CD4-positive, alpha-beta memory T cell (primary cell): ENCODE measurements at regions of chr1 and their contacts with region 1.

Region 1: GRCh38 chr1:28248283-28249012 is 10.9 kb upstream of the SESN2 start:
- DNase-seq: peak; percentile 77 to 83 (median 81)
- H3K4me3 ChIP-seq: peak overlapping the region; percentile 2 to 25
- H3K4me3 Mint-ChIP-seq: peak overlapping the region; percentile 75 to 96 (median 88)
- H3K27ac ChIP-seq: peak overlapping the region; percentile 83
- H3K27ac Mint-ChIP-seq: peak overlapping the region; percentile 88 to 99 (median 94)
- H3K4me1 ChIP-seq: peaks cover 57% of the 10 kb centered on the region
- H3K4me1 Mint-ChIP-seq: peaks cover 34 to 56% (median 48%) of the 10 kb centered on the region in 4 donors
- H3K27me3 ChIP-seq: no peaks in the 10 kb centered on the region
- H3K27me3 Mint-ChIP-seq: no peaks in the 10 kb centered on the region

Region 2: GRCh38 chr1:28259307-28260167 is 11.1 kb after region 1 on chr1 and contains the start of gene SESN2:
- CTCF ChIA-PET with region 1: interaction called, 47 read pairs
- POLR2A ChIA-PET with region 1: interaction called, 179 read pairs
- intact Hi-C with region 1: loop called (anchors 1 kb)
- DNase-seq: peak; percentile 99
- H3K4me3 ChIP-seq: peak within 1 kb of the TSS; percentile 69 to 82
- H3K4me3 Mint-ChIP-seq: peak within 1 kb of the TSS; percentile 77 to 90 (median 82)
- H3K27ac ChIP-seq: peak within 1 kb of the TSS; percentile 67
- H3K27ac Mint-ChIP-seq: peak within 1 kb of the TSS; percentile 72 to 88 (median 84)
- H3K4me1 ChIP-seq: peaks cover 59% of the 10 kb centered on the region
- H3K4me1 Mint-ChIP-seq: peaks cover 29 to 58% (median 43%) of the 10 kb centered on the region in 4 donors
- H3K27me3 ChIP-seq: no peaks in the 10 kb centered on the region
- H3K27me3 Mint-ChIP-seq: no peaks in the 10 kb centered on the region
- total RNA-seq, gene SESN2: 5.7 to 6.4 TPM

Region 3: DNA sequence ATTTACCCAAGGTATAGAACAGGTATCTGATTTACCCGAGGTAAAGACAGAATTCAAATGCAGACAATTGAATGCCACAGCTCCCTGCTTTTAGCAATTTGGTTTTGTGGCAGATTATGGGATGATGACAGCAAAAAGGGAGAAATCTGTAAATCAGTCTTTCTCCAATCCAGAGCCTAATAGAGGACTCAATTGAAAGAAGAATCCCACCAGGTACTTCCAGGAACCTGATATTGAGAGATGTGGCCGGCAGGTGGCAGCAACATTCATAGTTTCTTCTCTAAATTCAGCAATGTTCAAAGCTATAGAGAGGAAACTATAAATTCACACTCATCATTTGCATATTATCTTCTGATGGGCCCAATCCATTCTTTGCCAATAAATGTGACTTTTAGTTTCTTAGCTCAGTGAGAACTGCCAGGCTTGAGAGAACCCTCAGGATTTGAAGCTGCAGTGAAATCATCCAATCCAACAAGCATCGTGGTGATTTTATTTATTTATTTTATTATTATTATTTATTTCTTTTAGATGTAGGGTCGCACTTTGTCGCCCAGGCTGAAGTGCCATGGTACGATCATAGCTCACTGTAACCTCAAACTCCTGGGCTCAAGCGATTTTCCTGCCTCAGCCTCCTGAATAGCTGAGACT is 111.3 kb after region 1 on chr1:
- CTCF ChIA-PET with region 1: interaction called, 45 read pairs
- POLR2A ChIA-PET with region 1: interaction called, 15 read pairs
- intact Hi-C with region 1: loop called (anchors 1 kb)
- DNase-seq: peak; percentile 54 to 73 (median 61)
- H3K4me3 ChIP-seq: no peak overlapping the region
- H3K4me3 Mint-ChIP-seq: no peak overlapping the region
- H3K27ac ChIP-seq: no peak overlapping the region
- H3K27ac Mint-ChIP-seq: no peak overlapping the region
- H3K4me1 ChIP-seq: no peaks in the 10 kb centered on the region
- H3K4me1 Mint-ChIP-seq: peaks cover 0 to 4% (median 2%) of the 10 kb centered on the region in 4 donors
- H3K27me3 ChIP-seq: no peaks in the 10 kb centered on the region
- H3K27me3 Mint-ChIP-seq: no peaks in the 10 kb centered on the region

Region 4: DNA sequence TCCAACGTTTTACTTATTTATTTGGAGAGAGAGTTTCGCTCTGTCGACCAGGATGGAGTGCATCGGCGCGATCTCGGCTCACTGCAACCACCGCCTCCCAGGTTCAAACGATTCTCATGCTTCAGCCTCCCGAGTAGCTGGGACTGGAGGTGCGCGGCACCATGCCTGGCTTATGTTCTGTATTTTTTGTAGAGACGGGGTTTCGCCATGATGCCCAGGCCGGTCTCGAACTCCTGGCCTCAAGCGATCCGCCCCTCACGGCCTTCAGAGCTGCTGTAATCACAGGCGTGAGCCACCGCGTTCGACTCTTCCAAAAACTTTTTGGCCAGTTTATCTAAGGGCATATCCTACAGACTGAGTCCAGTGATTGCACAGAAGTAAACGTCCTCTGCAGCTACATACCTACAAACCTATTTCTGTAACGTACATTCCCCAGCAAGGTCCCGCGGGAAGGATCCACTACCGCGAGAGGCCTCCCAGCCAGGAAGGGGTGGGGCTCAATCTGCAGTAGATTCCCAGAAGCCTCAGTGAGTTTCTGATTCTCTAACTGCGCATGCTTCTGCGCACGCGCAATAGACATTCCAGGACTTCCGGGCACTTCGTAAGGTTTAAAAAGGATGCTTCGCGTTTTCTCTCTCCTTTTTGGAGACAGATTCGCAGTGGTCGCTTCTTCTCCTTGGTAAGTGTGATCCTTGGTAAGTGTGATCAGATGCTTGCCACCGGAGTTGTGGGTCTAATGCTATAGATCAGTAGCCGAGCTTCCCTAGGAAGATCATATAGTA is 257.1 kb after region 1 on chr1 and contains the start of gene RCC1:
- CTCF ChIA-PET with region 1: interaction called, 6 read pairs
- POLR2A ChIA-PET with region 1: interaction called, 12 read pairs
- intact Hi-C with region 1: loop called (anchors 1 kb)
- DNase-seq: peak; percentile 94 to 98 (median 97)
- H3K4me3 ChIP-seq: peak within 1 kb of the TSS; percentile 76 to 96
- H3K4me3 Mint-ChIP-seq: peak within 1 kb of the TSS; percentile 94 to 100 (median 98)
- H3K27ac ChIP-seq: peak within 1 kb of the TSS; percentile 66
- H3K27ac Mint-ChIP-seq: peak within 1 kb of the TSS; percentile 96 to 99 (median 98)
- H3K4me1 ChIP-seq: peaks cover 37% of the 10 kb centered on the region
- H3K4me1 Mint-ChIP-seq: peaks cover 29 to 53% (median 38%) of the 10 kb centered on the region in 4 donors
- H3K27me3 ChIP-seq: no peaks in the 10 kb centered on the region
- H3K27me3 Mint-ChIP-seq: no peaks in the 10 kb centered on the region
- total RNA-seq, gene RCC1: 16.7 to 18.4 TPM

Region 5: GRCh38 chr1:28648474-28649198 is 400.2 kb after region 1 on chr1 and contains the start of gene RNU11:
- CTCF ChIA-PET with region 1: no interaction called
- POLR2A ChIA-PET with region 1: interaction called, 13 read pairs
- intact Hi-C with region 1: loop called (anchors 5 kb)
- DNase-seq: peak; percentile 93 to 95 (median 95)
- H3K4me3 ChIP-seq: peak within 1 kb of the TSS; percentile 55 to 91
- H3K4me3 Mint-ChIP-seq: peak within 1 kb of the TSS; percentile 84 to 94 (median 90)
- H3K27ac ChIP-seq: peak within 1 kb of the TSS; percentile 96
- H3K27ac Mint-ChIP-seq: peak within 1 kb of the TSS; percentile 99 to 100 (median 99)
- H3K4me1 ChIP-seq: peaks cover 31% of the 10 kb centered on the region
- H3K4me1 Mint-ChIP-seq: peaks cover 15 to 36% (median 25%) of the 10 kb centered on the region in 4 donors
- H3K27me3 ChIP-seq: no peaks in the 10 kb centered on the region
- H3K27me3 Mint-ChIP-seq: no peaks in the 10 kb centered on the region
- total RNA-seq, gene RNU11: not detected

Region 6: DNA sequence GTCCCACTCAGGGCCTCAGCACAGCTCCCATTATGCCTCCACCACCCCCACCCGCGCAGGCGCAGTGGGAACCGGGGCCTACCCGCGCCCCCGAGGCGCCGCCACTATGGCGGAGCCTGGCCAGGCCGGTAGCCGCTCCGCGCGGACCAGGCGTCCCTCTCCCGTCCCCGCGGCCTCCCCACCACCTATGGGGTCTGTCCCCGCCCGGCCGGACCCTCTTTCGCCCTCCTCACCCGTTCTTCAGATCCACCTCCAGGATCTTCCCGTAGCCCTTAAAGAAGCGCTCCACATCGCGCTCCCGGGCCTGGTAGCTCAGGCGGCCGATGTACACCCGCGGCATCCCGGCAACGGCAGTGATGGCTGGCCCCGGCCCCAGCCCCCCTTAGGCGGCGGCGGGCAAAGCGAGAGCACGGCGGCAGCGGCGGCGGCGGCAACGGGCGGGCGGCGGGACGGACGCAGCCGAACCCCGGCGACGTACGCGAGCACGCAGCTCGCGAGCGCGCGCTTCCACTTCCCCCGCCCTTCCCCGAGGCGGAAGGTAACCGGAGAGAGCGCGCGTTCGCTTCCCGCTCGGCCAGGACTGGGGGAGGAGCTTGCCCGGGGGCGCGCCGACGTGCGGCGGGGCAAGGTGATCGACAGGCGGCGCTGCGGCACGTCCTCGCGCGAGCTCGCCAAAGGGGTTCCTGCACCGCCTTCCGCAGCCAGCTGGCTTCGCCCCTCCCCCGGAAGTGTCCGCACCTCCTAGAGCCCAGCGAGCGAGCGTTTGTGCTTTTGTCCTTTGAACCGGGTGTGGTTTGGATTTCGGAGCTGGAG is 933.2 kb after region 1 on chr1 and contains the start of gene SRSF4:
- CTCF ChIA-PET with region 1: no interaction called
- POLR2A ChIA-PET with region 1: interaction called, 8 read pairs
- intact Hi-C with region 1: loop called (anchors 2 kb)
- DNase-seq: peak; percentile 98 to 99 (median 99)
- H3K4me3 ChIP-seq: peak within 1 kb of the TSS; percentile 86 to 99
- H3K4me3 Mint-ChIP-seq: peak within 1 kb of the TSS; percentile 93 to 97 (median 95)
- H3K27ac ChIP-seq: peak within 1 kb of the TSS; percentile 93
- H3K27ac Mint-ChIP-seq: peak within 1 kb of the TSS; percentile 93 to 97 (median 95)
- H3K4me1 ChIP-seq: peaks cover 51% of the 10 kb centered on the region
- H3K4me1 Mint-ChIP-seq: peaks cover 30 to 64% (median 45%) of the 10 kb centered on the region in 4 donors
- H3K27me3 ChIP-seq: no peaks in the 10 kb centered on the region
- H3K27me3 Mint-ChIP-seq: no peaks in the 10 kb centered on the region
- total RNA-seq, gene SRSF4: 83.3 to 86.8 TPM